Activated T-helper 1 cell treated with anti-CD3 and anti-CD28 coated beads, Interleukin-12 subunit alpha, Interleukin-12 subunit beta, Interleukin-2, Interleukin-4 antibody, amounts not matched to agents 30 ng/mL and 10 ng/mL and 1 ng/mL, durations not matched to agents 14 hours and 24 hours and 36 hours (primary cell): ENCODE measurements at regions of chr19 and their contacts with region 1.

Region 1: DNA sequence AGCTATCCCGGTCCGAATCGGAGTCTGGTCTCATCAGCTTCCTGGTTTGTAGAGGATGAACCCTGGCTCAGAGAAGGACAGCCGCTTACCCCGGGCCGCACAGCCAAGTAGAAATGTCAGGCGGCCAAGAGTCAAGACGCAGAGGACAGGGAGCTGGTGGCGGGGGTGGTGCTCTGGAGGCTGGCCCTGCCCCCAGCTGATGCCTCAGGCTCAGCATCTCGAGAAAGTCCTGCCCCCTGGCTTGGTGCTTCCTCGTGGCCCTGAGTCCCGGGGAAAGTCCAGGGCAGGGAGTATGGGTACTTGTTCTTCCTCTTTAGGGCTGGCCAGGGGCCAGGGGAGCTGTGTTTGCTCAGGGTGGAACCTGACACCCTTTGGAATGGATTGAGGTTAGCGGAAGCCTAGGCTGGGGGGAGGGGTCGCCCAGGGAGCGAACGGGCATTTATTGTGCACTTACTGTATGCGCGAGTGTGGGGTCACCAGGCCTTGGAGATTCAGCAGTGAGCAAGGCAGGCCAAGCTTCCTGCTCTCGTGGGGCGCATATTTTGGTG is 2.2 kb downstream of the TJP3 start:
- DNase-seq: no peak
- H3K4me3 Mint-ChIP-seq: no peak overlapping the region
- H3K27ac Mint-ChIP-seq: no peak overlapping the region
- H3K4me1 Mint-ChIP-seq: no peaks in the 10 kb centered on the region
- H3K27me3 Mint-ChIP-seq: peaks cover 15% of the 10 kb centered on the region

Region 2: DNA sequence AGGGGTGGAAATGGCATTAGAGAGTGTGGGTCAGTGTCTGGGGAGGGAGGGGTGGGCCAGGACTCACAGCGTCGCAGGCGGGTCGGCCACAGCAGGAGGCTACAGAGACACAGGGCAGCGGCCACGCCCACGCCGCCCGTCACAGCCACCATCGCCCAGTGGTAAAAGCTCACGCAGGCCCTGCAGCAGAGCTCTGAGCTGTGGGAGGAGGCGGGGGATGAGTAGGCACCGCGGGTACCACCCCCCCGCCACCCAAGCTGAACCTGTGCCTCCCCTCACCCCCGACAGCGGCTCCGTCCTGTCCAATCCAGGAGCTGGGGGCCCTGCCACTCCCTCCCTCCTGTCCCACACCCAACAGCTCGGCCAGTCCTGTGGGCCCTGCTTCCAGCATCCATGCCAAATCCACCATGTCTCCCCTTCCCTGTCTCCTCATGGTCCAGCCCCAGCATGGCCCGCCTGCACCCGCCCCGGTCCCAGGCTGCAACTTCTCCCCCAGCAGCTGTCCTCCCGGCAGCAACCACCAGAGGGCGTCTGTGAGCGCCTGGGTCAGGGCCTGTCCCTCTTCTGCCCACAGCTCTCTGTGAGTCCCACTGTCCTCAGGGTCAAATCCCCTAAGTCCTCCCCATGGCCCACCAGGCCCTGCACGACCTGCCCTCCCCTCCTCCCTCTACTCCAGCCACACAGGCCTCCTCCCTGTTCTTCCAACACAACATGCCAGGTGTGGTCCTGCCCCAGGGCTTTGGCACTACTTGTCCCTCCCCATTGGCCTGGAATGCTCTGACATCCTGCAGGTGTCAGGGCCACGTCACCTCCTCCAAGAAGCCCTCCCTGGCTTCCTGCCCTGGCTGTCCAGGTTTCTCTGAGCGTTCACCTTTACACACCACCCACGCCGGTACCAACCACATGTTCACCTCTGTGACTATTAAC is 165.3 kb before region 1 on chr19:
- intact Hi-C with region 1: loop called (anchors 1 kb)
- DNase-seq: peak; percentile 66
- H3K4me3 Mint-ChIP-seq: no peak overlapping the region
- H3K27ac Mint-ChIP-seq: peak overlapping the region; percentile 5
- H3K4me1 Mint-ChIP-seq: no peaks in the 10 kb centered on the region
- H3K27me3 Mint-ChIP-seq: no peaks in the 10 kb centered on the region

Region 3: GRCh38 chr19:3665681-3666544 is 44.4 kb before region 1 on chr19:
- intact Hi-C with region 1: loop called (anchors 1 kb)
- DNase-seq: peak; percentile 66
- H3K4me3 Mint-ChIP-seq: no peak overlapping the region
- H3K27ac Mint-ChIP-seq: no peak overlapping the region
- H3K4me1 Mint-ChIP-seq: no peaks in the 10 kb centered on the region
- H3K27me3 Mint-ChIP-seq: no peaks in the 10 kb centered on the region

Region 4: GRCh38 chr19:4449022-4449638 is 738.8 kb after region 1 on chr19:
- intact Hi-C with region 1: no loop called
- DNase-seq: no peak
- H3K4me3 Mint-ChIP-seq: no peak overlapping the region
- H3K27ac Mint-ChIP-seq: no peak overlapping the region
- H3K4me1 Mint-ChIP-seq: no peaks in the 10 kb centered on the region
- H3K27me3 Mint-ChIP-seq: no peaks in the 10 kb centered on the region

Region 5: DNA sequence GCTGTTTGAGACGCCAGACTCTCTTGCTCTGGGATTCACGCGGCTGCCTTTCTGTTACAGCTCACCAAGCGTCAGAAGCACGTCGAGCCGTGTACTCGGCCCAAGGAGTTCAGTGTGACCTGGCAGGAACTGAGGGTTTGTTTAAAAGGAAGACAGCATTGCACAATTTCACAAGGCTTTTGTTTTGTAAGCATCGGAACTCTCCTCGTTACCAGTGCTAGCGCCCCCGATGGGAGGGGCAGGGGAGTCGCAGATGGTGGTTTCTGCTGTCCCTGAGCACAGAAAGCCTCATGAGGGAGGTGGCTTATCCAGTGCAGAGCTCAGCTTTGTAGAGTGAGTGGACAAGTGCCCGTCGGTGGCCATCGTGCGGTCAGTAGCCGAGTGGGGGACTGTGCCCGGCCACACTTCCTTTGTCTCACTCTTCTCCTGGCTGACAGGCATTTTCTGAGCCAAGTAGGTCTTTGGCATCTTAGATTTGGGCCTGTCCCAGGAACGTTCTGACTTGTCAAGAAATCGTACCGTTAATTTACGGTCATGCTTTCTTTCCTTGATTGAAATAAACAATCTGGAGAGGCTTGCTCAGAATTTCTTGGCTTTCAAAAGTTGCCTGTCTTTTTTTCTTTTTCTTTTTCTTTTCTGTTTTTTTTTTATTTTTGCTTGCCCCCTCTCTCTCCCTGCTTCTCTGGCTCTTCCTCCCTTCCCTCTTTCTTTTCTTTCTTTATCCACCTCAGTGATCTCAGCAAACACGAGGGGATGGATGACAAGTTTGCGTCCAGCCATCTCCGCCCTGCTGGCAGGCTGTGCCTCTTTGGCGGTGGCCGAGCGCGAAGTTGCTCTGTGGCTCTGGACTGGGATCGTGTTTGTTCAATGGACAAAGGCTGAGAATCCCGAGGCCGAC is 1266.3 kb after region 1 on chr19:
- intact Hi-C with region 1: no loop called
- DNase-seq: no peak
- H3K4me3 Mint-ChIP-seq: no peak overlapping the region
- H3K27ac Mint-ChIP-seq: peak overlapping the region; percentile 40
- H3K4me1 Mint-ChIP-seq: peaks cover 5% of the 10 kb centered on the region
- H3K27me3 Mint-ChIP-seq: no peaks in the 10 kb centered on the region